ENCODE measurements at regions of chr10 and their contacts with region 1.

Region 1: GRCh38 chr10:83248106-83248631 is 891.1 kb upstream of the GHITM start:
- DNase-seq: no peak
- H3K4me3 Mint-ChIP-seq: no peak overlapping the region
- H3K27ac Mint-ChIP-seq: no peak overlapping the region
- H3K4me1 Mint-ChIP-seq: no peaks in the 10 kb centered on the region
- H3K27me3 Mint-ChIP-seq: no peaks in the 10 kb centered on the region

Region 2: GRCh38 chr10:83205861-83206260 is 42.3 kb before region 1 on chr10:
- intact Hi-C with region 1: loop called (anchors 2 kb)
- DNase-seq: no peak
- H3K4me3 Mint-ChIP-seq: no peak overlapping the region
- H3K27ac Mint-ChIP-seq: no peak overlapping the region
- H3K4me1 Mint-ChIP-seq: no peaks in the 10 kb centered on the region
- H3K27me3 Mint-ChIP-seq: no peaks in the 10 kb centered on the region

Region 3: DNA sequence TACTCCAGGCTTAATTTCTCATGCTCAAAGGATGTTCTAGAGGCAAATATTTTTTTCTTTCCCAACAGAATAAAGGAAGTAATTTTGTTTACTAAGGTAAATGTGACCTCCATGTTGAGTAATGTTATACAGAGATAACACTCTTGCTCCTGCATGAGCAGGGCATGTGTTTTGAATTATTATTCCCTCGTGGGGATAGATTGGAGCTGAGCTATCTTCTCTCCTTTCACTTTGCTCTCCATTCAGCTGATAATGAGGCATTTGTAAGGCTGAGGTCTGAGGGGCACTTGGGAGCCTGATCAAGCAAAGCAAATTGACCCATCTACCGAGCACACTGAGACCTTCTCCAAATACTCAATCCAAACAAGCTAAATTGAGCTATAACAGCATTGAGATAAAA is 840.5 kb after region 1 on chr10:
- intact Hi-C with region 1: no loop called
- DNase-seq: no peak
- H3K4me3 Mint-ChIP-seq: no peak overlapping the region
- H3K27ac Mint-ChIP-seq: no peak overlapping the region
- H3K4me1 Mint-ChIP-seq: no peaks in the 10 kb centered on the region
- H3K27me3 Mint-ChIP-seq: peaks cover 6% of the 10 kb centered on the region